ENCODE measurements at regions of chr9 and their contacts with region 1.

Region 1: GRCh38 chr9:36222449-36222848 is 31.7 kb downstream of the CLTA start:
- DNase-seq: no peak
- ATAC-seq: no peak
- H3K4me3 ChIP-seq: no peak overlapping the region
- H3K27ac ChIP-seq: no peak overlapping the region
- H3K4me1 ChIP-seq: no peaks in the 10 kb centered on the region
- H3K27me3 ChIP-seq: no peaks in the 10 kb centered on the region
- CTCF ChIP-seq: no peak

Region 2: DNA sequence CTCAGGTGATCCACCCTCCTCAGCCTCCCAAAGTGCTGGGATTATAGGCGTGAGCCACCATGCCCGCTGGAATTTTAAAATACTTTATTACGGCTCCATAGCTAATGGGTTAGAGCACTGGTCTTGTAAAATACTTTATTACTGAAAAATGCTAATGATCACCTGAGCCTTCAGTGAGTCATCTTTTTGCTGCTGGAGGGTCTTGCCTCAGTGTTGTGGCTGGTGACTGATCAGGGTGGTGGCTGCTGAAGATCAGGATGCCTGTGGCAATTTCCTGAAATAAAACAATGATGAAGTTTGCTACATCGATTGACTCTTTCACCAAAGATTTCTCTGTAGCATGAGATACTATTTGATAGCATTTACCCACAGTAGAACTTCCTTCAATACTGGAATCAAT is 61.8 kb after region 1 on chr9:
- intact Hi-C with region 1: loop called in 1 of 3 experiments (anchors 10 kb)
- DNase-seq: no peak
- ATAC-seq: no peak
- H3K4me3 ChIP-seq: no peak overlapping the region
- H3K27ac ChIP-seq: no peak overlapping the region
- H3K4me1 ChIP-seq: no peaks in the 10 kb centered on the region
- H3K27me3 ChIP-seq: no peaks in the 10 kb centered on the region
- CTCF ChIP-seq: no peak

Measured in pancreas (tissue), 10 donors.